PC-9 (cell line): ENCODE measurements at regions of chr4 and their contacts with region 1.

Region 1: DNA sequence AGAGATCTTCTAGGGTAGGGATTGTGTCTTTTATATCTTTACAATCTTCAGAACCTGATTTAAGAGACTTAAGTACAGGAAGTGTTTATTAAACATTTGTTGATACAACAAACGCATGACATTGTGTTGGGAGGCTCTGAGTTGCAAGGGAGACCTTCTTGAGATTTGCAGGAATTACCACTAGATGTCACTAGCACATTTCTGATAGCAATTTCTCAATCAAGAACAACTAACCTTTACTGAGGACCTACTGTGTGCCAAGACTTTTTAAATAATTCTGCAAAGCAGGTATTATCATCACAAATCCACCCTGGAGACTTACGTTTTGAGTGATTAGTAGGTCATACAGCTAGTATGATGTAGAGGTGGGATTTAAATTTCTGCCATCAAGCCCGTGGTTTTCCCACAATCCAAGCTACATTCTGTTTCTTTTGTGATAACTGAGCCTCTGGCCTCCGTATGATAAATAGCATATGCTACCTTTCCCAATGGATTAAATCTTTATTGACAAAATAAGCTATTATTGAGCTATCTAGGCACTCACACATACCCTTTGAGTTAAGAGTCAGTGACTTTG is 986.0 kb downstream of the CCSER1 start:
- DNase-seq: no peak
- H3K4me3 ChIP-seq: no peak overlapping the region
- H3K27ac ChIP-seq: no peak overlapping the region
- H3K4me1 ChIP-seq: no peaks in the 10 kb centered on the region
- H3K27me3 ChIP-seq: no peaks in the 10 kb centered on the region
- CTCF ChIP-seq: peak; percentile 64

Region 2: DNA sequence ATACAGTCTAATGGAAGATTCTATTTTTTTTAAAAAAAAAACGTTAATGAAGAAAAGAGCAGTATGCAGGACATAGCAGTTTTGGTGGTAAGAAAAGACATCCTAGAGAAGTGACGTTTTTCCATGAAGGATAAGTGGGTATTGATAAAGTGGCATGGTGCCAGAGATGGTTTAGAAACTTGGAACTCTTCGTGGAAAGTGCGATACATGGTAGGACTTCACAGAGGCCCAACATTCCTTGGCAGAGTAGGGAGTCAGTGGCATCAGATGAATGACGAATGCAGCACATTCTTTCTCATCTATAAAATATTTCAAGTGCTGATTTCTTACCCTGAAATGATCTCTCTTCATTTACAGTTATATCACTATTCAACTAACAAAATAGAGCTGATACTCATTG is 687.3 kb before region 1 on chr4:
- CTCF ChIA-PET with region 1: no interaction called
- POLR2A ChIA-PET with region 1: no interaction called
- intact Hi-C with region 1: loop called (anchors 10 kb)
- DNase-seq: no peak
- H3K4me3 ChIP-seq: no peak overlapping the region
- H3K27ac ChIP-seq: no peak overlapping the region
- H3K4me1 ChIP-seq: no peaks in the 10 kb centered on the region
- H3K27me3 ChIP-seq: no peaks in the 10 kb centered on the region
- CTCF ChIP-seq: no peak

Region 3: DNA sequence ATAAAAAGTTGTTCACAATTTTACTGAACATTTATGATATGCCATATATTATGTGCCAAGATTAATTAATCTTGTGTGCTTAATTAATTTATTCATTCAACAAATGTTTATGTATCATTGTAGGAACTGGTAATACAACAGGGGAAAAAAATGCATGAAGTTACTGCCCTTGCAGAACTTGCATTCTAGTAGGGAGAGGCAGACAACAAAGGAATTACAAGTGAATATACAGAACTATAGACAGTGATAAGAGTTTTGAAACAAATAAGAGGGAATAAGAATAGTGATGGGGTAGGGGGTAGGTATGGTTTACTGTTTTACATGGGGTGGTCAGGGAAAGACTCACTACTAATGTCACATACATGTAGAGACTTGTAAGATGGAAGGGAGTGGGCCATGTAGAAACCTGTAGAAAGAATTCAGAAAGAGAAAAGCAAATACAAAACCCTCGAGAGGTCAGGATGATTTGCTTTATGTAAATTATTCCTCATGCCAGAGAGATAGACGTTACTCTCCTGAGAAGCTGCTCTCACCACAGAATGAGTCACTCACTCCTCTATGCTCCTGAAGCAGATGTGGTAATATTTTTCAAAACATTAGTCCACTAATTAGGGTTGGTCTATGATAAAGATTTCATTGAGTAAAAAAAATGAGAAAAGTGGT is 335.6 kb after region 1 on chr4:
- CTCF ChIA-PET with region 1: no interaction called
- POLR2A ChIA-PET with region 1: no interaction called
- intact Hi-C with region 1: loop called (anchors 1 kb)
- DNase-seq: no peak
- H3K4me3 ChIP-seq: no peak overlapping the region
- H3K27ac ChIP-seq: no peak overlapping the region
- H3K4me1 ChIP-seq: no peaks in the 10 kb centered on the region
- H3K27me3 ChIP-seq: no peaks in the 10 kb centered on the region
- CTCF ChIP-seq: no peak